ENCODE measurements at regions of chr1 and their contacts with region 1.

Region 1: GRCh38 chr1:97943354-97943753 is 22.5 kb upstream of the DPYD start:
- DNase-seq: no peak
- H3K4me3 Mint-ChIP-seq: peak overlapping the region; percentile 34
- H3K27ac Mint-ChIP-seq: peak overlapping the region; percentile 22
- H3K4me1 Mint-ChIP-seq: peaks cover 35% of the 10 kb centered on the region
- H3K27me3 Mint-ChIP-seq: peaks cover 11% of the 10 kb centered on the region

Region 2: DNA sequence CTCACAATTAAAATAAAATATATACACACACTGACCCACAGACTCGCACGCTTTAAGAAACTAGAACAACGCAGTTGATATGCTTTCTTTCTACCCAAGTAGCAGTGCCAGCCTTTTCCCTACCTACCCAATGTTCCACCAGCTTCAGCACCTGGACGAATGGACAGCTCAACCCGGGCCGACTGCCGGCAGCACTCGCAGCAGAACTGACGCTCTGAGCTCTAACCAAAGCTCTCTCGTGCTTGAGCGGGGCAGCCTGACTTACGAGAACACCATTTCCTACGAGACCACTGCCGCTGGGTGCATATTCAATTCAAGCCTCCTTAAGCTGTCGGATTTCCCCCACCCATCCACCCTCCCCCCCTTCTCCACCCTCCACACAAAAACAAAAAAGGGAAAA is 104.9 kb after region 1 on chr1:
- intact Hi-C with region 1: loop called (anchors 5 kb)
- DNase-seq: peak; percentile 54
- H3K4me3 Mint-ChIP-seq: no peak overlapping the region
- H3K27ac Mint-ChIP-seq: peak overlapping the region; percentile 59
- H3K4me1 Mint-ChIP-seq: peaks cover 51% of the 10 kb centered on the region
- H3K27me3 Mint-ChIP-seq: peaks cover 86% of the 10 kb centered on the region